Activated CD4-positive, alpha-beta memory T cell treated with anti-CD3 and anti-CD28 coated beads, Interleukin-2, amount 10 ng/mL, durations not matched to agents 7 days and 5 days (primary cell): ENCODE measurements at regions of chr2 and their contacts with region 1.

Region 1: DNA sequence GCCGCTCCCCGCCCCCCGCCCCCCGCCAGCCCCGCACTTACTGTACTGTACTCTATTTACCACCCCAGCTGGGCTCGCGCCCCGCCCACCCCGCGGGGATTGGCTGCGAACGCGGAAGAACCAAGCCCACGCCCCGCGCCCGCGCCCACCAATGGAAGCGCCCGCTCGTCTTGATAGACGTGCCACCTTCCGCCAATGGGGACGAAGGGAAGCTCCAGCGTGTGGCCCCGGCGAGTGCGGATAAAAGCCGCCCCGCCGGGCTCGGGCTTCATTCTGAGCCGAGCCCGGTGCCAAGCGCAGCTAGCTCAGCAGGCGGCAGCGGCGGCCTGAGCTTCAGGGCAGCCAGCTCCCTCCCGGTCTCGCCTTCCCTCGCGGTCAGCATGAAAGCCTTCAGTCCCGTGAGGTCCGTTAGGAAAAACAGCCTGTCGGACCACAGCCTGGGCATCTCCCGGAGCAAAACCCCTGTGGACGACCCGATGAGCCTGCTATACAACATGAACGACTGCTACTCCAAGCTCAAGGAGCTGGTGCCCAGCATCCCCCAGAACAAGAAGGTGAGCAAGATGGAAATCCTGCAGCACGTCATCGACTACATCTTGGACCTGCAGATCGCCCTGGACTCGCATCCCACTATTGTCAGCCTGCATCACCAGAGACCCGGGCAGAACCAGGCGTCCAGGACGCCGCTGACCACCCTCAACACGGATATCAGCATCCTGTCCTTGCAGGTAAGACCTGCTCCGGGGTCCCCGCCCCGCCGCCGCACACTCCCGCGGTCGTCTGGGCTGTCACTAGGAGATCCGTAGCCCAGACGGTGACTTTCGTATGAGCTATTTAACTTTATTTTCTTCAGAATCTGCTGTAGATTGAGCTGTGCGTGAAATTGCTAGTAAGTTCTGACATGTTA is at the start of gene ID2:
- DNase-seq: peak; percentile 99
- H3K4me3 Mint-ChIP-seq: peak within 1 kb of the TSS; percentile 96
- H3K27ac Mint-ChIP-seq: peak within 1 kb of the TSS; percentile 94
- H3K4me1 Mint-ChIP-seq: peaks cover 32% of the 10 kb centered on the region
- H3K27me3 Mint-ChIP-seq: peaks cover 10% of the 10 kb centered on the region
- total RNA-seq, gene ID2: 299 to 324 TPM

Region 2: DNA sequence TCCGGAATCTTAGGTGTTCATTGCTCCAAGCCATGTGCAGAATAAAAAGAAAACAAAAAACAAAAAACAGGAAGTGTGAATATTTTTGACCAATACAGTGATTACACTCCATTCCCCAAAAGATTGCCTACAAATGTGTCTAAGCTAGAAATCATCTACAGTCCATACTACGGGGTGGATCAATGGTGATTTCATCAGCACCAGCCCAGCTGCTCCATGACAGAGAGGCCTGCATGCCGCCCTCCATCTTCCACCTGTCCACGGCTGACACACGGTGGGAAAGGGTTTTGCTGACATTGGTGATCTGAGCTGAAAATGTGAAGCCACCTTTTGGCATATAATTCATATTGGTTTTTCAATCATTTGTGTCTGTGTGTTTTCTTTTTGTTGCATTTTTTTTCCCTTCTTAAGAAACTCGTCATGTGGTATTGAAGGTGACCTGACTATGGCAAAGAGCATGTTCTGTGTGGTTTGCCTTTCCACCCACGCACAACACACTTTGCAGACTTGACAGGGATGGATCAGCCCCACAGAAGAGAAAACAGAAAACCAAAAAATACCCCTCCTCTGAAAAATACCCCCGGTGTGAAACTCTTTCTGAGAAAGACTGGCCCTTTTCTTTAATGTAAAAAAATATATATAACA is 1231.7 kb before region 1 on chr2:
- CTCF ChIA-PET with region 1: no interaction called
- POLR2A ChIA-PET with region 1: interaction called, 17 read pairs
- DNase-seq: peak; percentile 56
- H3K4me3 Mint-ChIP-seq: no peak overlapping the region
- H3K27ac Mint-ChIP-seq: peak overlapping the region; percentile 97
- H3K4me1 Mint-ChIP-seq: peaks cover 68% of the 10 kb centered on the region
- H3K27me3 Mint-ChIP-seq: no peaks in the 10 kb centered on the region

Region 3: DNA sequence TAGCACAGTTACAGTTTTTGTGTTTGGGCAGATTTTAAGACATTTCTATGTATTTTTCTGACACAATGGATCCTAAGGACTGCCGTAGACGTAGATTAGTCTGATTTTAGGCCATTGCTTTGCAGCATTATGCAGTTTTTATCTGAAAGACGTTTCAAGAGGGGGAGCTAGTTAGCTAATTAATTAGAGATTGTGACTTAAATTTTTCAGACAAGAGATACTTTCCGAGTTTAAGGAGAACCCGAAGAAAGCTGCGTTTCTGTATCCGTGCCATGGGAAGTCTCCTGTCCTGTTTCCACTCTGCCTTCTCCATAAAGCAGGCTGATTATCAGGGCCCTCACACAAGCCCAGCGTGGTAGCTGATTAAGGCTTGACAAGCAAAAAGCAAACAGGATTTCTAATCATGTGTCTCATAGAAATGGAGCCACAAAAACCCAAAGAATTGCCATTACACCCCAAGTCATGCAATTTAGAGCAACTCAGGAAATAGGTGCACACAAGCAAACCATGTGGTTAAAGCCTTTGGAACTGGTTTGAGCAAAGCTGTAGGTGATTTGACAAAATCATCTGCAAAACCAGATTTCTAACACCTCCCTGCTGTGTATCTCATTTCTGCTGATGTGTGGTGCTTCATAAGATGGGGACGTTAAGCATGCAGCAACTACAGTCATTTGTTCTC is 956.7 kb before region 1 on chr2:
- CTCF ChIA-PET with region 1: interaction called, 16 read pairs
- POLR2A ChIA-PET with region 1: interaction called, 144 read pairs
- DNase-seq: peak; percentile 63
- H3K4me3 Mint-ChIP-seq: peak overlapping the region; percentile 80
- H3K27ac Mint-ChIP-seq: peak overlapping the region; percentile 94
- H3K4me1 Mint-ChIP-seq: peaks cover 58% of the 10 kb centered on the region
- H3K27me3 Mint-ChIP-seq: no peaks in the 10 kb centered on the region

Region 4: DNA sequence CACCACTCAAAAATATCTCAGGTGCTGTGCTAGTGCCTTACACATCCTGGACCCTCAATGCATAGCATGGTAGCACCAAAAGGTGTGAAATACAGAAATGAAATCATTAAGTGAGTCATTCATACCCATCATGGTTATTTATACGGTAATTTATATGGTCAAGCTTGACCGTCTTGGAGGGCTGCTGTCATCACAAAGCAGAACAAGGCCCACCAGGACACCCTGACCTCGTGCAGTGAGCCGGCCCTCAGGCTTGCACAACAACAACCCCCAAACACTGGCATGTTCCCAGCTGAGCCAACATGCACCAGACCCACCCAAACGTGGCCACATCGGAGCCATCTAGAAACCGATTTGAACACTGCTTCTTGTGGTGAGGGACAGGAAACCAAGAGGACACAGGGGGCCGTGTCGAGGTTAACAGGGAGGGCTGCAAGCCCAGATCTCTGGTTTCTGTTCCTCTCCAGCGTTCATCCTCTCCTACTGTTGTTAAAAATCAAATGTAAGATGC is 378.7 kb before region 1 on chr2:
- CTCF ChIA-PET with region 1: interaction called, 3 read pairs
- POLR2A ChIA-PET with region 1: interaction called, 20 read pairs
- DNase-seq: peak; percentile 88
- H3K4me3 Mint-ChIP-seq: peak overlapping the region; percentile 44
- H3K27ac Mint-ChIP-seq: peak overlapping the region; percentile 91
- H3K4me1 Mint-ChIP-seq: peaks cover 88% of the 10 kb centered on the region
- H3K27me3 Mint-ChIP-seq: no peaks in the 10 kb centered on the region

Region 5: DNA sequence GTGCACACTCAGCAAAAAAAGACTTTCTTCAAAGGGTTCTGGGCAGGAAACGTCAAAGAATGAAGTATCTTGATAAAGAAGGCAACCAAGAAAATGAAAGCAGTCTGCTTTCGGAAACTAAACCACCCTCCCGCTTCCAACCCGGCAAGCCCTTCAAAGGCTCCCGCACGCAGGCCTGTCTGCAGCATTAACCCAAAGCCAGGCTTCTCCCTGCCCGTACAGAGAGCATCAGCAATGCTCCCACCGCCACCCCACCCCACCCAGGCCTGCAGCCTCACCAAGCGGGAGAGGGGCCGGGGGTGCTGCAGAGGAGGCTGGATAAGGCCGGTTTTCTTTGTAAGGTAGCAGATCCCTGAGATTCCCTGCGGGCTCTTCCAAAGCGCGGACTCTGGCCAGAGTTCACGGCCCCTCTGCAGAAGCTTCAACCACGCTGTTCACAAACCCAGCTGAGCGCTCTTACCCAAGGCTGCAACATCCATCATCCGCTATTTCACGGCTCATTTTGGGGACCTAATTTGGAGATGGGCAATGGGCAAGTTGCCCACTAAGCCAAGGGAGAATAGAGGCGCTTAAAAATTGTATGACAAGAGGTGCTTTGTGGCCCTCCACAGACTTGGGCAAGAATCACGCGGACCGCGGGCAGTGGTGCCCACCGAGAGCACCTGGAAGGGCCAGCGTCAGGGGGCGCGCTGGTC is 225.7 kb before region 1 on chr2:
- CTCF ChIA-PET with region 1: no interaction called
- POLR2A ChIA-PET with region 1: interaction called, 29 read pairs
- DNase-seq: peak; percentile 71
- H3K4me3 Mint-ChIP-seq: peak overlapping the region; percentile 82
- H3K27ac Mint-ChIP-seq: peak overlapping the region; percentile 98
- H3K4me1 Mint-ChIP-seq: peaks cover 64% of the 10 kb centered on the region
- H3K27me3 Mint-ChIP-seq: no peaks in the 10 kb centered on the region

Region 6: GRCh38 chr2:8514796-8515758 is 167.0 kb before region 1 on chr2:
- CTCF ChIA-PET with region 1: interaction called, 3 read pairs
- POLR2A ChIA-PET with region 1: interaction called, 27 read pairs
- DNase-seq: peak; percentile 77
- H3K4me3 Mint-ChIP-seq: peak overlapping the region; percentile 41
- H3K27ac Mint-ChIP-seq: peak overlapping the region; percentile 89
- H3K4me1 Mint-ChIP-seq: peaks cover 73% of the 10 kb centered on the region
- H3K27me3 Mint-ChIP-seq: no peaks in the 10 kb centered on the region

Region 7: GRCh38 chr2:8574144-8575037 is 107.6 kb before region 1 on chr2:
- CTCF ChIA-PET with region 1: no interaction called
- POLR2A ChIA-PET with region 1: interaction called, 24 read pairs
- DNase-seq: no peak
- H3K4me3 Mint-ChIP-seq: no peak overlapping the region
- H3K27ac Mint-ChIP-seq: no peak overlapping the region
- H3K4me1 Mint-ChIP-seq: peaks cover 29% of the 10 kb centered on the region
- H3K27me3 Mint-ChIP-seq: peaks cover 9% of the 10 kb centered on the region

Region 8: GRCh38 chr2:8821276-8822217 is 139.5 kb after region 1 on chr2:
- CTCF ChIA-PET with region 1: no interaction called
- POLR2A ChIA-PET with region 1: no interaction called
- DNase-seq: no peak
- H3K4me3 Mint-ChIP-seq: no peak overlapping the region
- H3K27ac Mint-ChIP-seq: no peak overlapping the region
- H3K4me1 Mint-ChIP-seq: peaks cover 1% of the 10 kb centered on the region
- H3K27me3 Mint-ChIP-seq: no peaks in the 10 kb centered on the region